H1 (cell line): ENCODE measurements at regions of chr11 and their contacts with region 1.

Region 1: GRCh38 chr11:15629690-15630321 is 515.1 kb downstream of the INSC start:
- DNase-seq: peak in 1 of 2 experiments; percentile 78
- H3K4me3 ChIP-seq: no peak overlapping the region
- H3K27ac ChIP-seq: no peak overlapping the region
- H3K4me1 ChIP-seq: peaks cover 0 to 4% (median 3%) of the 10 kb centered on the region in 4 experiments; a peak in 2 of 7 replicates
- H3K27me3 ChIP-seq: no peaks in the 10 kb centered on the region
- CTCF ChIP-seq: peak in 2 of 3 experiments; percentile 51 to 62; a peak in 3 of 4 replicates
- EP300 ChIP-seq: no peak
- POLR2A ChIP-seq: no peak
- RAD21 ChIP-seq: peak; percentile 40 to 60; a peak in 3 of 4 replicates

Region 2: GRCh38 chr11:15615398-15616096 is 14.3 kb before region 1 on chr11:
- CTCF ChIA-PET with region 1: interaction called, 38 read pairs
- POLR2A ChIA-PET with region 1: no interaction called
- DNase-seq: no peak
- H3K4me3 ChIP-seq: no peak overlapping the region
- H3K27ac ChIP-seq: no peak overlapping the region
- H3K4me1 ChIP-seq: no peaks in the 10 kb centered on the region
- H3K27me3 ChIP-seq: no peaks in the 10 kb centered on the region
- CTCF ChIP-seq: no peak
- EP300 ChIP-seq: no peak
- POLR2A ChIP-seq: no peak
- RAD21 ChIP-seq: peak in 1 of 2 experiments; percentile 20; a peak in 1 of 4 replicates

Region 3: DNA sequence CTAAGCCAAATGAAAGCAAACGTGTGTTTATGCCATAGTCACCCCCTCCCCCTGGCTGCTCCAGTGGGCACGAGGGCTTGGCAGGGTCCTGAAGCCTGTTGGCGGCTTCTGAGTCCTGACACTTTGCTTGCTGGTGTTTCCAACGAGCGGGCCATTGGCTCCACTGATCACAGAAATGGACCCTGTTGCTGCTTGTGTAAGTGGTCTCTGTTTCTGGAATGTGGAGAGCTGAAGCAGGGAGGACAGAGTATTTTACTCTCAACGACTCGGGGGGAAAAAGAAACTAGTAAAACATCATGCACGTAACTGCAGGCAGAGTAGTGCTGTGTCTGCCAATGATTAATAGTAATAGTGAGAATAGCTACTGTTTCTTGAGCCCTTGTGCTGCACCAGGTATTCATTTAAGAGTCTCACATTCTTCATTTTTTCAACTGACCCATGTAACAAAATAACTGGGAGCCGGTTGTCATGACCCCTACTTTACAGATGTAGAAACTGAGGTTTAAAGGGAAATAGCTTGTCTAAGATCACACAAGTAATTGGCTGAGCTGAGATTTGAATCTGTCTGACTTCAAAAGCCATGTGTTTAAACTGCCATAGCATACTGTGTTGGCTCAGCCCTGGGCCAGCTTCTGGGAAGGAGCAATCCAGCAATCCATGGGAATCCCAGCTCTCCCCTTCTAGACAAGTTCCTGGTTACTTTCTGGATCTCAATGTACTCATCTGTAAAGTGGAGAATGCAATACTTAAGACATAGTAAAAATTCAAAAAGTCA is 11.7 kb after region 1 on chr11:
- CTCF ChIA-PET with region 1: interaction called, 79 read pairs
- POLR2A ChIA-PET with region 1: no interaction called
- DNase-seq: no peak
- H3K4me3 ChIP-seq: no peak overlapping the region
- H3K27ac ChIP-seq: no peak overlapping the region
- H3K4me1 ChIP-seq: no peaks in the 10 kb centered on the region
- H3K27me3 ChIP-seq: no peaks in the 10 kb centered on the region
- CTCF ChIP-seq: no peak
- EP300 ChIP-seq: no peak
- POLR2A ChIP-seq: no peak
- RAD21 ChIP-seq: no peak

Region 4: GRCh38 chr11:15663777-15664218 is 34.0 kb after region 1 on chr11:
- CTCF ChIA-PET with region 1: no interaction called
- POLR2A ChIA-PET with region 1: no interaction called
- DNase-seq: peak in 1 of 2 experiments; percentile 59
- H3K4me3 ChIP-seq: no peak overlapping the region
- H3K27ac ChIP-seq: no peak overlapping the region
- H3K4me1 ChIP-seq: peaks cover 0 to 7% (median 4%) of the 10 kb centered on the region in 4 experiments; a peak in 4 of 7 replicates
- H3K27me3 ChIP-seq: no peaks in the 10 kb centered on the region
- CTCF ChIP-seq: no peak
- EP300 ChIP-seq: no peak
- POLR2A ChIP-seq: no peak
- RAD21 ChIP-seq: no peak

Region 5: DNA sequence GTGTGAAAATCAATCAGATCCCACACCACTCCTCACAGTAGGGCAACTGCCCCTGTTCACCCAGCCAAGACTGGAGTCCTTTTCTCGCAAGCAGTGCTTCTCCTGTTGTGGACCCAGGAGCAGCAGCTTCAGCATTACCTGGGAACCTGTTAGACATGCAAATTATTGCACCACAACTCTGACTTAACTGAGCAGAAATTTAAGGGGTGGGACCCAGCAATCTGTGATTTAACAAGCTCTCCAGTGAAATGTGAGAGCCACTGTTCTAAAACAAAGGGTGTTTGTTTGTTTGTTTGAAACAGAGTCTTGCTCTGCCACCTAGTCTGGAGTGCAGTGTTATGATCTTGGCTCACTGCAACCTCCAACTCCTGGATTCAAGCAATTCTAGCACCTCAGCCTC is 135.1 kb after region 1 on chr11:
- CTCF ChIA-PET with region 1: no interaction called
- POLR2A ChIA-PET with region 1: no interaction called
- DNase-seq: no peak
- H3K4me3 ChIP-seq: no peak overlapping the region
- H3K27ac ChIP-seq: no peak overlapping the region
- H3K4me1 ChIP-seq: peaks cover 0 to 5% (median 1%) of the 10 kb centered on the region in 4 experiments; a peak in 2 of 7 replicates
- H3K27me3 ChIP-seq: no peaks in the 10 kb centered on the region
- CTCF ChIP-seq: no peak
- EP300 ChIP-seq: no peak
- POLR2A ChIP-seq: no peak
- RAD21 ChIP-seq: no peak